ENCODE measurements at regions of chr17 and their contacts with region 1.

Region 1: GRCh38 chr17:36892112-36892838 is 45.0 kb upstream of the LHX1 start:
- DNase-seq: peak; percentile 70
- H3K4me3 Mint-ChIP-seq: no peak overlapping the region
- H3K27ac Mint-ChIP-seq: no peak overlapping the region
- H3K4me1 Mint-ChIP-seq: peaks cover 13% of the 10 kb centered on the region
- H3K27me3 Mint-ChIP-seq: peaks cover 61% of the 10 kb centered on the region
- CTCF ChIP-seq: no peak

Region 2: DNA sequence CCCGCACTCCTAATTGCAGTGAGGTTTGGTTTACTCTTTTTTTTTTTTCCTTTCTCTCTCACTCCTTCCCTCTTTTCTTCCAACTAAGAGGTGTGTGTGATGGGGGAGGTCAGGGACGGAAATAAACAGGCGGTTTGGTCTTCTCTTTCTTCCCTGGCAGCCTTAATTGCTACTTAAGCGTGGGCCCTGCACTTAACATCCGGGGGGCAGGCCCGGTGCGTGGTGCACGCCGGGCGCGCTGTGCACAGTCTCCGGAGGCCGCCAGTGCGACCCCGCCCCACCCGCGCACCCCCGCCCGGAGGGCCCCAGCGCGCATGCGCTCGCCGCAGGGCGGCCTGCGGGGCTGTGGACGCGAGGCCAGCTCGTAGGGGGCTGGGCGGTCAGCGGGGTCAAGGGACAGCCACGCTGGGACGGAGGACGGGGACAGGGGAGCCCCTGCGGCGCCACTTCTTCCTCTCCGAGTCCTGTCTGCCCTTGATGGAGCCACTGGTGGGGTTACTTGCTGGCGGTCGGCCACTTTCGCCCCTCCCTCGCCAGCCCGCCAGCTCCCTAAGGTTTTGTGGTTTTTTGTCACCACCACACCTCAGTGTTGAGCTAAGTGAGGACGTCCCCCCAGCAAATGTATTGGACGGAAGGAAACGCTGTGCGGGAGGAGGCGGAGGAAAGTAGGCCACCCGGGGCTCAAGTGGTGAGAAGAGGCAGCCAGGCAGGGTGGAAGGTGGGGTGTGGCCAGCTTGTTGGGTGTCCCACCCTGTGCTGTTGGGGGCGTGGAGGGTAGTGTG is 170.0 kb before region 1 on chr17:
- CTCF ChIA-PET with region 1: interaction called, 10 read pairs
- intact Hi-C with region 1: no loop called
- DNase-seq: peak; percentile 58
- H3K4me3 Mint-ChIP-seq: peak overlapping the region; percentile 7
- H3K27ac Mint-ChIP-seq: no peak overlapping the region
- H3K4me1 Mint-ChIP-seq: no peaks in the 10 kb centered on the region
- H3K27me3 Mint-ChIP-seq: peaks cover 97% of the 10 kb centered on the region
- CTCF ChIP-seq: no peak

Region 3: GRCh38 chr17:36808181-36808661 is 84.1 kb before region 1 on chr17:
- CTCF ChIA-PET with region 1: no interaction called
- intact Hi-C with region 1: no loop called
- DNase-seq: no peak
- H3K4me3 Mint-ChIP-seq: peak overlapping the region; percentile 29
- H3K27ac Mint-ChIP-seq: no peak overlapping the region
- H3K4me1 Mint-ChIP-seq: no peaks in the 10 kb centered on the region
- H3K27me3 Mint-ChIP-seq: peaks cover 86% of the 10 kb centered on the region
- CTCF ChIP-seq: no peak

Region 4: GRCh38 chr17:37570527-37571093 is 678.3 kb after region 1 on chr17:
- CTCF ChIA-PET with region 1: no interaction called
- intact Hi-C with region 1: no loop called
- DNase-seq: peak; percentile 92
- H3K4me3 Mint-ChIP-seq: no peak overlapping the region
- H3K27ac Mint-ChIP-seq: no peak overlapping the region
- H3K4me1 Mint-ChIP-seq: no peaks in the 10 kb centered on the region
- H3K27me3 Mint-ChIP-seq: no peaks in the 10 kb centered on the region
- CTCF ChIP-seq: peak; percentile 88

Measured in Calu3 (cell line).